Dendritic cell treated with granulocyte-macrophage colony-stimulating factor and Interleukin-4, amounts not matched to agents 40 ng/mL and 50 ng/mL, for 4 days (primary cell): ENCODE measurements at regions of chr5 and their contacts with region 1.

Region 1: GRCh38 chr5:35963381-35963843 is 25.0 kb upstream of the CAPSL start:
- H3K4me3 Mint-ChIP-seq: no peak overlapping the region
- H3K27ac Mint-ChIP-seq: no peak overlapping the region
- H3K4me1 Mint-ChIP-seq: no peaks in the 10 kb centered on the region
- H3K27me3 Mint-ChIP-seq: peaks cover 4% of the 10 kb centered on the region

Region 2: DNA sequence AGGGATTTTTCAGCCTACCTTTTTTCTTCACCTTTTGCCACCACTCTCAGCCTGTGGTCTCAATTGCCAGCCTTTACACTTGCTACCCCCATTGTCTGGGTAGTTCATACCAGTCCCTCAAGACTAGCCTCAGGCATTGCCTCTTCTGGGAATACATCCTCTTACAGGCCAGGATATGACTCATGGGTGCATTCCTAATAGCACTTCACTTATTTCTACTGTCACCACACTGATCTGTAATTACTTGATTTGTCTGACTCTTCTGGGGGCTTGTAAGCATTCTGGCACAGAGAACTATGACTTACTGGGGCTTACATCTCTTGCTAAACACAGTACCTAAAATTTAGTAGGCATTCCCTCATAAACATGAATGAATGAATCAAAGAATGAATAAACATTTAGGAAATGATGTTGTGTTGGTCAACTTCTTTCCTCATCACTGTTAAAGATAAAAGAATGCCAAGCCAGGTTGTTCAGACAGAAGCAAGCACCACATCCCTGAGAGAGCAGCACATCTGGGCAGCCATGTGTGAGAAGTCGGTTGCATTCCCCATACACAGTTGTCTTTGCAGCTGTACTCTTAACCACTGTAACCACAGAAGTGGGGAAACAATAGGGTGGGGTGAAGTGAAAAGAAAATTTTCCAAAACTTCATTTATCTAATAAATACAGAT is 79.2 kb before region 1 on chr5:
- intact Hi-C with region 1: no loop called
- H3K4me3 Mint-ChIP-seq: no peak overlapping the region
- H3K27ac Mint-ChIP-seq: peak overlapping the region; percentile 75
- H3K4me1 Mint-ChIP-seq: peaks cover 37% of the 10 kb centered on the region
- H3K27me3 Mint-ChIP-seq: no peaks in the 10 kb centered on the region

Region 3: GRCh38 chr5:36089989-36090564 is 126.7 kb after region 1 on chr5:
- intact Hi-C with region 1: loop called (anchors 10 kb)
- H3K4me3 Mint-ChIP-seq: no peak overlapping the region
- H3K27ac Mint-ChIP-seq: no peak overlapping the region
- H3K4me1 Mint-ChIP-seq: no peaks in the 10 kb centered on the region
- H3K27me3 Mint-ChIP-seq: no peaks in the 10 kb centered on the region

Region 4: GRCh38 chr5:37184748-37185364 is 1221.4 kb after region 1 on chr5:
- intact Hi-C with region 1: no loop called
- H3K4me3 Mint-ChIP-seq: no peak overlapping the region
- H3K27ac Mint-ChIP-seq: no peak overlapping the region
- H3K4me1 Mint-ChIP-seq: peaks cover 5% of the 10 kb centered on the region
- H3K27me3 Mint-ChIP-seq: no peaks in the 10 kb centered on the region